HepG2 (cell line): ENCODE measurements at regions of chr2 and their contacts with region 1.

Region 1: GRCh38 chr2:46410273-46411247 is 68.8 kb upstream of the TMEM247 start:
- DNase-seq: no peak
- ATAC-seq: no peak
- H3K4me3 ChIP-seq: no peak overlapping the region
- H3K27ac ChIP-seq: peak overlapping the region; percentile 86
- H3K4me1 ChIP-seq: peaks cover 97% of the 10 kb centered on the region
- H3K27me3 ChIP-seq: no peaks in the 10 kb centered on the region
- CTCF ChIP-seq: no peak
- EP300 ChIP-seq: no peak
- POLR2A ChIP-seq: no peak
- RAD21 ChIP-seq: no peak

Region 2: GRCh38 chr2:45993476-45993991 is 417.0 kb before region 1 on chr2:
- CTCF ChIA-PET with region 1: no interaction called
- POLR2A ChIA-PET with region 1: interaction called, 10 read pairs
- in situ Hi-C with region 1: no loop called
- intact Hi-C with region 1: no loop called
- DNase-seq: peak; percentile 78
- ATAC-seq: peak; percentile 56
- H3K4me3 ChIP-seq: peak overlapping the region in 2 of 3 experiments; percentile 13 to 59; a peak in 3 of 6 replicates
- H3K27ac ChIP-seq: peak overlapping the region; percentile 72
- H3K4me1 ChIP-seq: peaks cover 36% of the 10 kb centered on the region
- H3K27me3 ChIP-seq: no peaks in the 10 kb centered on the region
- CTCF ChIP-seq: peak; percentile 87
- EP300 ChIP-seq: peak in 1 of 2 experiments; percentile 15; a peak in 1 of 4 replicates
- POLR2A ChIP-seq: no peak
- RAD21 ChIP-seq: peak; percentile 76

Region 3: DNA sequence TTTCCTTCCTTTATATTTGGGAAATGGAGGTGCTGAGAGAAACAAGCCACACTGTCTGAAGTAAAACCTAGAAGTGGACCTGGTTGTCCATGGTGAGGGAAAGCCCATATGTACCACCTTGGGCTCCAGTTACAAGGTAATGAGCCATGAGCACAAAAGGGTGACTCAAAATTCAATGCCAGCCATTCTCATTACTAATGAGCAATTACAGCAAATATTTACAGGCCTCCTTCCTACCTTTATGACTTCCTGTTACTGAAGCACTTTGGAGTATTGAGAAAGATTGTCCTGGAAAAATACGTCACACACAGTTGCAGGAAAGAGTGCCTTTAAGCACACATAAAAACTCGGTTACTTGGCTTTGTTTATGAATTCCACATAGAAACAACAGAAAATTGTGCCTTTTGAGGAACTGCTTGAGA is 104.2 kb before region 1 on chr2:
- CTCF ChIA-PET with region 1: no interaction called
- POLR2A ChIA-PET with region 1: interaction called, 10 read pairs
- in situ Hi-C with region 1: no loop called
- intact Hi-C with region 1: loop called (anchors 5 kb)
- DNase-seq: peak; percentile 97
- ATAC-seq: peak; percentile 55
- H3K4me3 ChIP-seq: peak overlapping the region; percentile 44 to 54 (median 54); a peak in 4 of 6 replicates
- H3K27ac ChIP-seq: peak overlapping the region; percentile 97
- H3K4me1 ChIP-seq: peaks cover 100% of the 10 kb centered on the region
- H3K27me3 ChIP-seq: no peaks in the 10 kb centered on the region
- CTCF ChIP-seq: no peak
- EP300 ChIP-seq: peak in 1 of 2 experiments; percentile 97; a peak in 2 of 4 replicates
- POLR2A ChIP-seq: peak in 1 of 2 experiments; percentile 52; a peak in 3 of 4 replicates
- RAD21 ChIP-seq: 0 out of 2 replicates have a peak, but pooled peaks have one; percentile 7

Region 4: GRCh38 chr2:46394649-46395510 is 15.7 kb before region 1 on chr2:
- CTCF ChIA-PET with region 1: no interaction called
- POLR2A ChIA-PET with region 1: interaction called, 14 read pairs
- in situ Hi-C with region 1: no loop called
- intact Hi-C with region 1: loop called (anchors 2 kb)
- DNase-seq: peak; percentile 92
- ATAC-seq: peak; percentile 87
- H3K4me3 ChIP-seq: peak overlapping the region in 2 of 3 experiments; percentile 17 to 29; a peak in 3 of 6 replicates
- H3K27ac ChIP-seq: peak overlapping the region; percentile 60
- H3K4me1 ChIP-seq: peaks cover 47% of the 10 kb centered on the region
- H3K27me3 ChIP-seq: no peaks in the 10 kb centered on the region
- CTCF ChIP-seq: no peak
- EP300 ChIP-seq: peak; percentile 53 to 93; a peak in 3 of 4 replicates
- POLR2A ChIP-seq: no peak
- RAD21 ChIP-seq: no peak

Region 5: GRCh38 chr2:46441838-46442712 is 31.5 kb after region 1 on chr2:
- CTCF ChIA-PET with region 1: no interaction called
- POLR2A ChIA-PET with region 1: interaction called, 7 read pairs
- in situ Hi-C with region 1: no loop called
- intact Hi-C with region 1: loop called (anchors 2 kb)
- DNase-seq: peak; percentile 66
- ATAC-seq: peak; percentile 66
- H3K4me3 ChIP-seq: no peak overlapping the region
- H3K27ac ChIP-seq: no peak overlapping the region
- H3K4me1 ChIP-seq: peaks cover 70% of the 10 kb centered on the region
- H3K27me3 ChIP-seq: no peaks in the 10 kb centered on the region
- CTCF ChIP-seq: no peak
- EP300 ChIP-seq: no peak; a peak in 1 of 4 replicates
- POLR2A ChIP-seq: no peak
- RAD21 ChIP-seq: no peak

Region 6: DNA sequence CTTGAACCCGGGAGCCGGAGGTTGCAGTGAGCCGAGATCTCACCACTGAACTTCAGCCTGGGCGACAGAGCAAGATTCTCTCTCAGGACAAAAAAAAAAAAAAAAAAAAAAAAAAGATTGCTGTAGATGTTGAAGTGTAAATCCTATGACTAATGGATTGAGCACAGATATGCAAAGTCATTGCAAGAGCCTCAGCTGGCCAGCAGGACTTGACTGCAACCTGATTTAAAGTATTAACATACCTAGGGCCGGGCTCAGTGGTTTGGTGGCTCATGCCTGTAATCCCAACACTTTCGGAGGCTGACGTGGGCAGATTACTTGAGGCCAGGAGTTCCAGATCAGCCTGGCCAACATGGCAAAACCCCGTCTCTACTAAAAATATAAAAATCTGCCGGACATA is 889.0 kb after region 1 on chr2:
- CTCF ChIA-PET with region 1: no interaction called
- POLR2A ChIA-PET with region 1: no interaction called
- in situ Hi-C with region 1: no loop called
- intact Hi-C with region 1: loop called (anchors 5 kb)
- DNase-seq: no peak
- ATAC-seq: no peak
- H3K4me3 ChIP-seq: no peak overlapping the region
- H3K27ac ChIP-seq: no peak overlapping the region
- H3K4me1 ChIP-seq: peaks cover 18% of the 10 kb centered on the region
- H3K27me3 ChIP-seq: no peaks in the 10 kb centered on the region
- CTCF ChIP-seq: no peak
- EP300 ChIP-seq: no peak
- POLR2A ChIP-seq: no peak
- RAD21 ChIP-seq: no peak